ENCODE measurements at regions of chr2 and their contacts with region 1.

Region 1: DNA sequence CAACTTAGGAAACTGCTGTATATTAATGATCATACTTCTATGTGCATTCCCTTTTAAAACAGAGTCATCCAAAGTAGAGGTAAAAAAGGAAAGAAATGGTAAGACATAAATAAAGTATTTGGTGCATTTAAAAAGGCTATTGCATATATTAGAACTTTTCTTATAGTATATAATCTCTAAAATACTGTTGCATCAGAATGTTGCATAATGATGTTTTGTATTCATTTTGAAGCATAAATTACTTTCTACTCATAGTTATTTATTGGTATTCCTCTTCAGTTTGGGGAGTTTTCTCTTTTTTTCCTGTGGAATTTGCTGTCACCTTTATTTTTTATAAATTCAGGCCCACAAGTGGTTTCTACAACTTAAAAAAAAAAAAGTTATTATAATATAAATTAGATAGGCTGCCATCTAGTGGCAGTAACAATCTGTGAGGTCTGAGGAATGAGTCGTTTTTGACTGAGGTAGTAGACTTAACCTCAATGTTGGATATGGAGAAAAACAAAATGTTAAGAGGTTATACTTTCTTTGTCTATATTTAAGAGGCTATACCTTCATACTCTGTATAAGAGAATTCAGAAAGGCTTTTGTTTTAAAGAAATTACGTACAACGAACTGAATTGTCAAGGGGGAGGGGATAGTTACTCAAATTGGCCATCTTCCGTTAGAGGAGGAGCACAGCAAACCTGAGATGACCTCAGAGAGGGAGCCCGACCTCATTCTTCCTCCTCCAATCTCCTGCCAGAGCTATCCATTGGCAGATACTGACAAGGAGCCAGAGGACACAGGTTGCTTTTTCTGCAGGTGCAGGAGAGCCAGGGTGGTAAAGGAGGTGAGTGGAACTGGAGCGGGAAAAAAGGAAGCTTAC is 23.8 kb downstream of the ANKAR start:
- DNase-seq: no peak
- H3K4me3 ChIP-seq: no peak overlapping the region
- H3K27ac ChIP-seq: no peak overlapping the region
- H3K4me1 ChIP-seq: peaks cover 0 to 4% (median 0%) of the 10 kb centered on the region in 4 donors
- H3K27me3 ChIP-seq: no peaks in the 10 kb centered on the region
- CTCF ChIP-seq: peak; percentile 14 to 56 (median 34)
- EP300 ChIP-seq: no peak
- POLR2A ChIP-seq: no peak

Region 2: GRCh38 chr2:189641590-189641989 is 56.7 kb before region 1 on chr2:
- intact Hi-C with region 1: no loop called
- DNase-seq: no peak
- H3K4me3 ChIP-seq: no peak overlapping the region
- H3K27ac ChIP-seq: no peak overlapping the region
- H3K4me1 ChIP-seq: no peaks in the 10 kb centered on the region
- H3K27me3 ChIP-seq: no peaks in the 10 kb centered on the region
- CTCF ChIP-seq: no peak
- EP300 ChIP-seq: no peak
- POLR2A ChIP-seq: no peak

Region 3: GRCh38 chr2:189674374-189675112 is 23.7 kb before region 1 on chr2 and contains the start of gene ANKAR:
- intact Hi-C with region 1: loop called (anchors 2 kb)
- DNase-seq: peak; percentile 94
- H3K4me3 ChIP-seq: peak within 1 kb of the TSS; percentile 53 to 70 (median 61)
- H3K27ac ChIP-seq: peak within 1 kb of the TSS; percentile 85 to 98 (median 94)
- H3K4me1 ChIP-seq: peaks cover 0 to 29% (median 14%) of the 10 kb centered on the region in 4 donors
- H3K27me3 ChIP-seq: no peaks in the 10 kb centered on the region
- CTCF ChIP-seq: peak; percentile 44 to 91 (median 62)
- EP300 ChIP-seq: no peak
- POLR2A ChIP-seq: peak; percentile 30 to 34
- total RNA-seq, gene ANKAR: 11.9 to 27.7 (median 23.9) TPM

Measured in sigmoid colon (tissue), 7 donors.